Heart right ventricle (tissue), 16 donors: ENCODE measurements at regions of chr5 and their contacts with region 1.

Region 1: DNA sequence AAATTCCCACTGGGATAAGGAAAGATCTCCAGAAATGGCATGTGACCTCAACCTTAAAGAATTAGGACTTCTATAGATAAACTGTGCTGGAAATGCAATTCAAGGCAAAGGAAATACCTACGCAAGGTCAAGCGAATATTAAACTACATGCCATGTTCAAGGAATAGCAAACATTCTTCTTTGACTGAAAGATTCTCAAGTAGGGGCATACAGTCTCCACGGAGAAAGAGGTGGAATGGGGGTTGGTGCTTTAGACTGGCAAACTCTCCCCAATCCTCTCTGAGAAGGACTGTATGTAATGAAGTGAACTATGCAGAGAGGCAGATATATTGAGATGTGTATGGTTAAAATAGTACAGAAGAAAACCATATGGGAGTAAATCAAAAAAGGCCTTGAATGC is 6.1 kb downstream of the RICTOR start:
- DNase-seq: no peak
- ATAC-seq: no peak
- H3K4me3 ChIP-seq: no peak overlapping the region
- H3K27ac ChIP-seq: no peak overlapping the region
- H3K4me1 ChIP-seq: peaks cover 0 to 84% (median 44%) of the 10 kb centered on the region in 9 donors
- H3K27me3 ChIP-seq: no peaks in the 10 kb centered on the region
- CTCF ChIP-seq: no peak

Region 2: GRCh38 chr5:39015743-39016586 is 52.1 kb before region 1 on chr5:
- intact Hi-C with region 1: loop called in 5 of 10 experiments (anchors 5 kb)
- DNase-seq: no peak
- ATAC-seq: peak; percentile 49 to 72 (median 66)
- H3K4me3 ChIP-seq: no peak overlapping the region
- H3K27ac ChIP-seq: peak overlapping the region; percentile 34 to 90 (median 76)
- H3K4me1 ChIP-seq: peaks cover 2 to 54% (median 28%) of the 10 kb centered on the region in 9 donors
- H3K27me3 ChIP-seq: no peaks in the 10 kb centered on the region
- CTCF ChIP-seq: no peak

Region 3: GRCh38 chr5:39024005-39024404 is 44.1 kb before region 1 on chr5:
- intact Hi-C with region 1: loop called in 4 of 10 experiments (anchors 5 kb)
- DNase-seq: peak in 1 of 2 donors; percentile 13
- ATAC-seq: peak; percentile 52 to 87 (median 81)
- H3K4me3 ChIP-seq: no peak overlapping the region
- H3K27ac ChIP-seq: peak overlapping the region in 4 of 10 donors; percentile 8 to 49 (median 30)
- H3K4me1 ChIP-seq: peaks cover 0 to 49% (median 40%) of the 10 kb centered on the region in 9 donors
- H3K27me3 ChIP-seq: no peaks in the 10 kb centered on the region
- CTCF ChIP-seq: peak in 2 of 9 donors; percentile 23 to 25